GM13976 (cell line): ENCODE measurements at regions of chr1 and their contacts with region 1.

Region 1: GRCh38 chr1:74771913-74772515 is 39.1 kb downstream of the TYW3 start:
- DNase-seq: peak; percentile 6
- CTCF ChIP-seq: peak; percentile 62

Region 2: GRCh38 chr1:75198761-75199160 is 426.7 kb after region 1 on chr1:
- in situ Hi-C with region 1: loop called (anchors 10 kb)
- DNase-seq: no peak
- CTCF ChIP-seq: no peak

Region 3: GRCh38 chr1:75214017-75214416 is 442.0 kb after region 1 on chr1:
- in situ Hi-C with region 1: loop called (anchors 10 kb)
- DNase-seq: no peak
- CTCF ChIP-seq: no peak